ENCODE measurements at regions of chr7 and their contacts with region 1.

Region 1: DNA sequence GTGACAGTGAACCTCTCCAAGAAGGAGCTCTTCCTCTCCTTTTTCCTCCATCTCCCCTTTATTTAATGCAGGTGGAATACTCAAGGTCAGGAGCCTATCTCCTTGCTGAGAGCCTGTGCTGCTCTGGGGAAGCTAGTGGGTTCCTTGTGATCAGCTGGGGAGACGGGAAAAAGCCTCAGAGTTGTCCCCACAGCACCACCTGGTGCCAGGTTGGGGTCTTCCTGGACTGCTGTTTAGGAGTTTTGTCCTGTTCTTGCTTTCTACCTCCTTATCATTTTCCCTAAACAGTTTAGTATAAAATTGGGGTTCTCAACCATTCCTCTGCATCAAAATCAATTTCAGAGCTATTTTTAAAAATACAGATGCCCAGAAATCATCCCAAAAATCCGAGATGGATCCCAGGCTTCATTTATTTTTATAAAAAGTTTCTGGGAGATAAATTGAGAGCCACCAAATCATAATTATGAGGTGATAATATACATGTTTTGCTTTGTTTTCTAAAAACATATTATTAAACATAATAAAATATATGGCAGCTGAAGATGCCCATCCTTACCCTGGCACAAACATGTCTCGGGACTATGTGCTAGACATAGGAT is 44.3 kb downstream of the MACC1 start:
- DNase-seq: peak; percentile 67 to 84 (median 75)
- H3K4me3 ChIP-seq: no peak overlapping the region
- H3K27ac ChIP-seq: no peak overlapping the region
- H3K4me1 ChIP-seq: no peaks in the 10 kb centered on the region
- H3K27me3 ChIP-seq: no peaks in the 10 kb centered on the region
- CTCF ChIP-seq: peak in 2 of 3 donors; percentile 47 to 52
- EP300 ChIP-seq: no peak
- POLR2A ChIP-seq: no peak

Region 2: GRCh38 chr7:19747740-19748339 is 425.0 kb before region 1 on chr7:
- intact Hi-C with region 1: loop called in 3 of 4 experiments (anchors 5 to 10 kb)
- DNase-seq: no peak
- H3K4me3 ChIP-seq: no peak overlapping the region
- H3K27ac ChIP-seq: no peak overlapping the region
- H3K4me1 ChIP-seq: no peaks in the 10 kb centered on the region
- H3K27me3 ChIP-seq: no peaks in the 10 kb centered on the region
- CTCF ChIP-seq: peak in 1 of 3 donors; percentile 34
- EP300 ChIP-seq: no peak
- POLR2A ChIP-seq: no peak

Region 3: GRCh38 chr7:19754521-19755116 is 418.2 kb before region 1 on chr7:
- intact Hi-C with region 1: loop called in 3 of 4 experiments (anchors 5 to 10 kb)
- DNase-seq: no peak
- H3K4me3 ChIP-seq: no peak overlapping the region
- H3K27ac ChIP-seq: no peak overlapping the region
- H3K4me1 ChIP-seq: no peaks in the 10 kb centered on the region
- H3K27me3 ChIP-seq: no peaks in the 10 kb centered on the region
- CTCF ChIP-seq: peak in 1 of 3 donors; percentile 29
- EP300 ChIP-seq: no peak
- POLR2A ChIP-seq: no peak

Region 4: GRCh38 chr7:20033621-20034400 is 139.0 kb before region 1 on chr7:
- intact Hi-C with region 1: no loop called
- DNase-seq: no peak
- H3K4me3 ChIP-seq: no peak overlapping the region
- H3K27ac ChIP-seq: no peak overlapping the region
- H3K4me1 ChIP-seq: no peaks in the 10 kb centered on the region
- H3K27me3 ChIP-seq: no peaks in the 10 kb centered on the region
- CTCF ChIP-seq: no peak
- EP300 ChIP-seq: no peak
- POLR2A ChIP-seq: no peak

Region 5: GRCh38 chr7:20327055-20327454 is 154.2 kb after region 1 on chr7:
- intact Hi-C with region 1: no loop called
- DNase-seq: no peak
- H3K4me3 ChIP-seq: no peak overlapping the region
- H3K27ac ChIP-seq: no peak overlapping the region
- H3K4me1 ChIP-seq: peaks cover 1% of the 10 kb centered on the region
- H3K27me3 ChIP-seq: no peaks in the 10 kb centered on the region
- CTCF ChIP-seq: no peak
- EP300 ChIP-seq: no peak
- POLR2A ChIP-seq: no peak

Region 6: GRCh38 chr7:20359341-20359963 is 186.6 kb after region 1 on chr7:
- intact Hi-C with region 1: no loop called
- DNase-seq: no peak
- H3K4me3 ChIP-seq: no peak overlapping the region
- H3K27ac ChIP-seq: no peak overlapping the region
- H3K4me1 ChIP-seq: peaks cover 6% of the 10 kb centered on the region
- H3K27me3 ChIP-seq: no peaks in the 10 kb centered on the region
- CTCF ChIP-seq: no peak
- EP300 ChIP-seq: no peak
- POLR2A ChIP-seq: no peak